MCF 10A (cell line): ENCODE measurements at regions of chr17 and their contacts with region 1.

Region 1: GRCh38 chr17:75784473-75785015 is at the start of gene UNK:
- DNase-seq: peak; percentile 99
- H3K4me3 Mint-ChIP-seq: peak within 1 kb of the TSS; percentile 80
- H3K27ac Mint-ChIP-seq: peak within 1 kb of the TSS; percentile 96
- H3K4me1 Mint-ChIP-seq: peaks cover 19% of the 10 kb centered on the region
- H3K27me3 Mint-ChIP-seq: no peaks in the 10 kb centered on the region
- CTCF ChIP-seq: no peak
- total RNA-seq, gene UNK: 12.3 and 16.0 TPM in 2 replicates

Region 2: GRCh38 chr17:75688209-75688825 is 96.2 kb before region 1 on chr17:
- CTCF ChIA-PET with region 1: no interaction called
- POLR2A ChIA-PET with region 1: interaction called, 27 read pairs
- intact Hi-C with region 1: no loop called
- DNase-seq: peak; percentile 81
- H3K4me3 Mint-ChIP-seq: peak overlapping the region; percentile 0
- H3K27ac Mint-ChIP-seq: peak overlapping the region; percentile 90
- H3K4me1 Mint-ChIP-seq: peaks cover 75% of the 10 kb centered on the region
- H3K27me3 Mint-ChIP-seq: no peaks in the 10 kb centered on the region
- CTCF ChIP-seq: no peak

Region 3: DNA sequence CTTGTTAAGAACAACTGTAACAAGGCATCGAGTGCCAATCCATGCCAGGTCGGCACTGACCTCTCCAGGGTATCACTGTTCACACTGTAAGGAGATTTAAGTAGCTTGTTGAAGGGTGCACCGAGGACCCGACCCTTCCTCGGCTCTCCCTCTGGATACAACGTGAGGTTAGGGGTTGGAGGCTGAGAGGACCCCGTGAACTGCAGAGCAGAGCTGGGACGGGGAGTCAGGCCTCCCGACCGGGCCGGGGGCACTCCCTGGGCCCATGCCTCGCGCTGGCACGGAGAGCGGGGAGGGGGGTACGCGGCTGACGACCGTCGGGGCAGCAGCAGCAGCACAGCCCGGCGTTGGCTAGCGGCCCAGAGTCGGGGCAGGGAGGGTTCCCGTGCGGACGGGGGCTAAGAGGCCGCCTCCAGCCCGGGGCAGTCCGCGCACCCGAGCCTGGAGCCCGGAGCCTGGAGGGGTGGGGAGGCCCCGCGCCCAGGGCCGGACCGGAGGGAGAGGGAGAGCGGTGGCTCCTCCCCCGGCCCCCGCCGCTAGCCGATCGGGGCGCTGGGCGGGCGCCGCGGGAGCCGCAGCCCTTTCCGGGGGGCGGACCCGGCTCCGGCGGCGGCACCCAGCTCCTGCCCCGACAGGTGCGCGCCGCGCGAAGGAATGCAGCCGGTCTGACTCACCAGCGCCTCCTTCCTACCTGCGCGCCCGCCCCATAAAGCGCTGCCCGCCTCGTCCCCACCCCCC is 63.6 kb before region 1 on chr17 and contains the start of gene ITGB4:
- CTCF ChIA-PET with region 1: interaction called, 3 read pairs
- POLR2A ChIA-PET with region 1: interaction called, 24 read pairs
- intact Hi-C with region 1: no loop called
- DNase-seq: peak; percentile 85
- H3K4me3 Mint-ChIP-seq: peak within 1 kb of the TSS; percentile 87
- H3K27ac Mint-ChIP-seq: peak within 1 kb of the TSS; percentile 78
- H3K4me1 Mint-ChIP-seq: peaks cover 6% of the 10 kb centered on the region
- H3K27me3 Mint-ChIP-seq: no peaks in the 10 kb centered on the region
- CTCF ChIP-seq: no peak
- total RNA-seq, gene ITGB4: 727 and 1,054 TPM in 2 replicates

Region 4: DNA sequence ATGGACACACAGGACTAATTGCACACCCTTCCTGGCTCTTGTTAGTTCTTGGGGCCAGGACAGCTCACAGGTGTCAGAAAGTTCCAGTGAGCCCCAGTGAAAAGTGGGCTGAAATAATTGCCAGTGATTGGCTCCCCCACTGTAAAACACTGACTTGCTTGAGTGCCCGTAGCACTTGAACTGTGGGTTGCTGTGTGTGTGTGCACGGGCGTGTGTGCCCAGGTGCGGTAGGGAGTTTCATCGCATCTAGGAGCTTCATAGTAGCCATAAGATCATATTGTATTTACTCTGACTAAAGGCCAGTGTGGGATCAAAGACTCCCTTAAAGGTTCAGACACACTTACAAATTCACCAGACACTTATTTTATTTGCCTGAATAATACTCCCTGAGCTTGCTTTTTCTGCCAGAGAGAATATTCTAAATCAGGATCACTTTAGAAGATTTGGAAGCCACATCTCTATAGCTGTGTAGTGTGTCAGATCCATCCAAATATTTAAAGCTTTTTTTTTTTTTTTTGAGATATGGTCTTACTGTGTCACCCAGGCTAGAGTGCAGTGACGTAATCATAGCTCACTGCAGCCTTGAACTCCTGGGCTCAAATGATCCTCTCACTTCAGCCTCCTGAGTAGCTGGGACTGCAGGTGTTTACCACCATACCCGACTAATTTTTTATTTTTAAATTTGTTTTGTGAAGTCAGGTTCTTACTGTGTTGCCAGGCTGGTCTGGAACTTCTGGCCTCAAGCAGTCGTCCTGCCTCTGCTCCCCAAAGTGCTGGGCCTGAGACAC is 11.5 kb after region 1 on chr17:
- CTCF ChIA-PET with region 1: interaction called, 3 read pairs
- POLR2A ChIA-PET with region 1: interaction called, 25 read pairs
- intact Hi-C with region 1: no loop called
- DNase-seq: no peak
- H3K4me3 Mint-ChIP-seq: no peak overlapping the region
- H3K27ac Mint-ChIP-seq: no peak overlapping the region
- H3K4me1 Mint-ChIP-seq: no peaks in the 10 kb centered on the region
- H3K27me3 Mint-ChIP-seq: no peaks in the 10 kb centered on the region
- CTCF ChIP-seq: no peak

Region 5: GRCh38 chr17:75877752-75878173 is 93.2 kb after region 1 on chr17:
- CTCF ChIA-PET with region 1: interaction called, 3 read pairs
- POLR2A ChIA-PET with region 1: interaction called, 91 read pairs
- intact Hi-C with region 1: loop called (anchors 2 kb)
- DNase-seq: peak; percentile 76
- H3K4me3 Mint-ChIP-seq: peak overlapping the region; percentile 86
- H3K27ac Mint-ChIP-seq: peak overlapping the region; percentile 89
- H3K4me1 Mint-ChIP-seq: peaks cover 13% of the 10 kb centered on the region
- H3K27me3 Mint-ChIP-seq: no peaks in the 10 kb centered on the region
- CTCF ChIP-seq: peak; percentile 34